ENCODE measurements at regions of chr19 and their contacts with region 1.

Region 1: GRCh38 chr19:17075035-17075863 is at the starts of genes HAUS8 and MYO9B:
- DNase-seq: peak; percentile 99 to 100
- H3K4me3 ChIP-seq: peak within 1 kb of the TSS; percentile 96 to 99
- H3K27ac ChIP-seq: peak within 1 kb of the TSS; percentile 92 to 98
- H3K4me1 ChIP-seq: peaks cover 0 to 55% (median 43%) of the 10 kb centered on the region in 4 donors
- H3K27me3 ChIP-seq: no peaks in the 10 kb centered on the region
- CTCF ChIP-seq: no peak

Region 2: GRCh38 chr19:17149393-17150135 is 74.3 kb after region 1 on chr19:
- intact Hi-C with region 1: loop called (anchors 5 kb)
- DNase-seq: no peak
- H3K4me3 ChIP-seq: no peak overlapping the region
- H3K27ac ChIP-seq: no peak overlapping the region
- H3K4me1 ChIP-seq: peaks cover 0 to 10% (median 8%) of the 10 kb centered on the region in 4 donors
- H3K27me3 ChIP-seq: no peaks in the 10 kb centered on the region
- CTCF ChIP-seq: no peak

Region 3: DNA sequence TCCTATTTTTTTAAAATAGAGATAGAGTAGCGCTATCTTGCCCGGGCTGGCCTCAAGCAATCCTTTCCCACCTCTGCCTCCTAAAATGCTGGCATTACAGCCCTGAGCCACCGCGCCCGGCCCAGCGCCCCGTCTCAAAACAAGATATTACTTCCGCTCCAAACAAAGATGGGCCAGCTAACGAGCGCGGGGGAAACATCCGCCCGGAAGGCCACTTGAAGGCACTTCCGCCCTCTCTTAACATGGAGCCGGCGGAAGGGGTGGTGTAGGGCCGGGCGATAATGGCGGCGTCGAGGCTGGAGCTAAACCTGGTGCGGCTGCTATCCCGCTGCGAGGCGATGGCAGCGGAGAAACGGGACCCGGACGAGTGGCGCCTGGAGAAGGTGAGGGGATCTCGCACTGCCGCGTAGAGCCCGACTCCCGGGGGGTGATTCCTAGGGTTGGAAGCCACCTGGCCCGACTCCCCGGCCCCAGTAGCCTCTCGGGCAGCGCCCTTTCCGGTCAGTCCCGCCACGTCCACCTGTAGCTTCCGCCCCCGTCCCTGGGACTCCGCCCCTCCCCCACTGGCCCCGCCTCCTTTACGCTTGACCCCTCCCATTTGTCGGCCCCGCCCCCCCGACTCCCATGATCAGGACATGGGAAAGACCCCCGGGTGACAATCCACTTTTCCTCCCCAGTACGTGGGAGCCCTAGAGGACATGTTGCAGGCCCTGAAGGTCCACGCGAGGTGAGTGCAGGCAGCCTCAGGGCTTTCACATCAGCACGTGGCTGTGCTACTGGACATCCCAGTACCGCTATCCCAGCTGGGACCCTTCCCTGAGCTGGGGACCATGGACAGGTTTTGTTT is 140.1 kb after region 1 on chr19 and contains the start of gene USE1:
- intact Hi-C with region 1: no loop called
- DNase-seq: peak; percentile 94
- H3K4me3 ChIP-seq: peak within 1 kb of the TSS; percentile 66 to 93
- H3K27ac ChIP-seq: peak within 1 kb of the TSS; percentile 89 to 91
- H3K4me1 ChIP-seq: peaks cover 0 to 22% (median 16%) of the 10 kb centered on the region in 4 donors
- H3K27me3 ChIP-seq: no peaks in the 10 kb centered on the region
- CTCF ChIP-seq: no peak

Region 4: GRCh38 chr19:17235618-17236377 is 160.5 kb after region 1 on chr19:
- intact Hi-C with region 1: loop called (anchors 10 kb)
- DNase-seq: peak; percentile 60 to 83
- H3K4me3 ChIP-seq: peak overlapping the region; percentile 48 to 70
- H3K27ac ChIP-seq: peak overlapping the region; percentile 63 to 82
- H3K4me1 ChIP-seq: peaks cover 0 to 28% (median 21%) of the 10 kb centered on the region in 4 donors
- H3K27me3 ChIP-seq: no peaks in the 10 kb centered on the region
- CTCF ChIP-seq: peak; percentile 35 to 46